ENCODE measurements at regions of chr22 and their contacts with region 1.

Region 1: DNA sequence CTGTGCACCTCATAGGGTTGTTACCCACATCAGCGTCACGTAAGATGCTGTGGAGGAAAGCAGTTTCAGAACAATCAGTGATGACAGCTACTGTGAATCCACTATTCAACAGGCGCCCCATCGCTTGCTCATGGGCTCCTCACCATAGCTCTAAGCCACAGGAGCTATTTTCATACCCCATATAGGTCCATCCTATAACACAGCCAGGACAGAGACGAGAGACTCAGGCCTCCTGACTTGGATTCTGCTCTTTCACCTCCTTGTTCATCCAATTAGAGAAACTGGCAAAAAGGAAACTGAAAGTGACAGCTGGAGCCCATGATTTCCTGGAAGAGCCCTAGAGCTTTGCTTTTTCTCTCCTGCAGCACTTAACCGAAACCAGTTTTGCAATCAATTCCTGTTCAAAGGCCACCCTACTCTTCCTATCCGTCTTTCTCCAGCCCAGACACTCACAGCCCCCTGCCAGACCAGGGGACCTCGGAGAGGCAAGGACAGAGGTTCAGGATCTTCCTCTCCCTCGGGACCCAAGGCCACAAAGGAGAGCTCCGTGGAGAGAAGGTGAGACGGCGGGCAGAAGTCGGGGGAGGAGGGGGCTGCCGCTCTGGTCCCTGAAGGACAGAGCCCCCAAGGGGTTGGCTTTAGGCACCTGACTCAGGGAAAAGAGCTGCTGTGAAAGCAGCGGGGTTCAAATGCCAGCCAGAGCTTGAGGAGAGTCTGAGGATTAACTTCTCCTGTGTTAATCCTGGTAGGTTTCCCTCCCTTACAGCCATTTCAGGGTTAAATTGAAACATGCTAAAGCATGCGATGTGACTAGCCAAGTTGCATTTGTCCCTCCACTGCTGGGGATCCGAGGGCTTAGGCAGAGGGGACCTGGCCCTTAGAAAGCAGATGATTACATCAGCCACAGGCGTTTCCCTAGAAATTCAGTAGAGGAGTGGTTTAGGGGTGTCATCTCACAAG is at the start of gene APOL6:
- DNase-seq: peak; percentile 33
- ATAC-seq: peak; percentile 65
- H3K4me3 Mint-ChIP-seq: peak within 1 kb of the TSS; percentile 96
- H3K27ac Mint-ChIP-seq: peak within 1 kb of the TSS; percentile 94
- H3K4me1 Mint-ChIP-seq: peaks cover 31% of the 10 kb centered on the region
- H3K27me3 Mint-ChIP-seq: peaks cover 3% of the 10 kb centered on the region
- CTCF ChIP-seq: no peak
- total RNA-seq, gene APOL6: 7.7 and 8.0 TPM in 2 replicates

Region 2: DNA sequence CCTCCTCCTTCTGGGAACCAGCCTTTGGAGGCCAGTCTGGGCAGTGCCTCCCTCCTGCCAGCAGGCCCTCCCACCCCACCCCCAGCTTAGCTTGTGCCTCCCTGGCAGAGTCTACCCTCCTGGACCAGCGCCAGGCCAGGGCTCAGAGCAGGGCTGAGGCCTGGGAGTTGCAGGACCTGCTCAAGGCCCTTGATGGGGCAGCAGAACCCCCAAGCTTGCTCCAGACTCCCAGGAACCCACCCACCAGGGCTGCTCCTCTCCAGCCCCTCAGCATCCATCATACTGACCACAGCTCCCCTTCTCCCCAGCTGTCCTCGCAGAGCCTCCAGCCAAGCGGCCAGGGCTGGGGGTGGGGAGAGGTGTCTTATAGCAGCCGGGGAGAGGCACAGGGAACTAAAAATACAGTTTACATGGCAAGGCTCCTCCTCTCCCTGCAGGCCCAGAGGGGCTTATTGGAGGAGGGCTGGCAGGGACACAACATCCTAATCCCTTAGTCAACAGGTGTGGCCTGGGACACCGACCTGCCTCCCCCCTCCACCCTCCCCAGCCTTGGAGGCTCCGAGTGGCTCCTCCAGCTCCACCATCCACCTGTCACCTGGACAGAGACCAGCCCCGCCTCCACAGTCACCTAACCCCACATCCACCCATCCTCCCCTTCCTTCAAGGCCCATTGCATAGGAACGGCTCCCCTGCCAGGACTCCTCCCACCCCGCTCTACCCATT is 26.0 kb before region 1 on chr22:
- CTCF ChIA-PET with region 1: no interaction called
- POLR2A ChIA-PET with region 1: no interaction called
- intact Hi-C with region 1: no loop called
- DNase-seq: no peak
- ATAC-seq: no peak
- H3K4me3 Mint-ChIP-seq: no peak overlapping the region
- H3K27ac Mint-ChIP-seq: no peak overlapping the region
- H3K4me1 Mint-ChIP-seq: peaks cover 6% of the 10 kb centered on the region
- H3K27me3 Mint-ChIP-seq: peaks cover 34% of the 10 kb centered on the region
- CTCF ChIP-seq: no peak

Region 3: GRCh38 chr22:35660291-35661127 is 12.2 kb after region 1 on chr22:
- CTCF ChIA-PET with region 1: interaction called, 4 read pairs
- POLR2A ChIA-PET with region 1: interaction called, 15 read pairs
- intact Hi-C with region 1: no loop called
- DNase-seq: no peak
- ATAC-seq: peak; percentile 94
- H3K4me3 Mint-ChIP-seq: no peak overlapping the region
- H3K27ac Mint-ChIP-seq: peak overlapping the region; percentile 76
- H3K4me1 Mint-ChIP-seq: peaks cover 40% of the 10 kb centered on the region
- H3K27me3 Mint-ChIP-seq: no peaks in the 10 kb centered on the region
- CTCF ChIP-seq: no peak

Region 4: DNA sequence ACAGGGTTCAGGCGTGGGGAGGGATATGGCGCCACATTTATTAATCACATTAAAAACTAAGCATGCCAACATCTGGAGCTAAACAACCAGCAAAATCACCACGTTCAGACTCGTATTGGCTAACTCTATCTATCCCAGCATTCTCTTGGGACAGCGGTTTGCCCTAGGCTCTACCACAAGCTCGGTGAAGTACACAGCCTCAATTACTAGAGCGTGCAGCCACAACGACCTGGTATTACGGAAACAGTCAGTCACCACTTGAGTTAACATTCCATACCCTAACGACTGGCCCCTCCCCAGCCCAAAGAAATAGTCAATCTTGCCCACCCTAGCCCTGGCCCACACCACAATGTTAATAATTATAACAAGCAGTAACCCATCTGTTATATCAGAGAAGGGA is 101.5 kb after region 1 on chr22:
- CTCF ChIA-PET with region 1: no interaction called
- POLR2A ChIA-PET with region 1: interaction called, 3 read pairs
- intact Hi-C with region 1: loop called (anchors 2 kb)
- DNase-seq: peak; percentile 42
- ATAC-seq: peak; percentile 95
- H3K4me3 Mint-ChIP-seq: peak overlapping the region; percentile 53
- H3K27ac Mint-ChIP-seq: peak overlapping the region; percentile 24
- H3K4me1 Mint-ChIP-seq: peaks cover 29% of the 10 kb centered on the region
- H3K27me3 Mint-ChIP-seq: peaks cover 62% of the 10 kb centered on the region
- CTCF ChIP-seq: no peak

Measured in activated B cell treated with CpG ODN at 0.5 μM for 24 hours (primary cell).